Mammary epithelial cell (primary cell): ENCODE measurements at regions of chr7 and their contacts with region 1.

Region 1: GRCh38 chr7:121195874-121196755 is 132.7 kb upstream of the WNT16 start:
- DNase-seq: no peak
- H3K4me3 ChIP-seq: no peak overlapping the region
- H3K27ac ChIP-seq: no peak overlapping the region
- H3K4me1 ChIP-seq: no peaks in the 10 kb centered on the region
- H3K27me3 ChIP-seq: peaks cover 1% of the 10 kb centered on the region
- CTCF ChIP-seq: no peak

Region 2: DNA sequence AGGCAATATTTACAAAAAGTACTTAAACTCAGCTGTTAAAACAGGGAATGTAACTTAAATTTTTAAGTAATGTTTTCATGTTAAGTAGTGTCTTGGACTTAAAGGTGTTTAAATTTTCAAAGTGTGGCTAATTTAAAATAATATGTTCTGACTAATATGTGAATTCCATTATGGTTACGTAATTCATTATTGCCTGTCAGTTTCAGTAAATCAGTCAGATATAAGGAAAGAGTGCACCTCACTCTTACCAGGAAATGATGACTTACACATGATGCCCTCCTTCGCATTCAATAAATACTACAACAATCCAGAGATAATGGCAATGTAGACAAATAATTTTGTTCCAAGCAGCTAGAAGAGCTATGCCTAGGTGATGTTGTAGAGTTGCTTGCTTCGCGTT is 63.7 kb after region 1 on chr7:
- CTCF ChIA-PET with region 1: no interaction called
- dilution Hi-C with region 1: loop called (anchors 5 kb)
- in situ Hi-C with region 1: no loop called
- intact Hi-C with region 1: no loop called
- DNase-seq: no peak
- H3K4me3 ChIP-seq: no peak overlapping the region
- H3K27ac ChIP-seq: no peak overlapping the region
- H3K4me1 ChIP-seq: no peaks in the 10 kb centered on the region
- H3K27me3 ChIP-seq: peaks cover 4% of the 10 kb centered on the region
- CTCF ChIP-seq: no peak